ENCODE measurements at regions of chr17 and their contacts with region 1.

Region 1: GRCh38 chr17:48084932-48085444 is 16.3 kb downstream of the CBX1 start:
- DNase-seq: no peak
- ATAC-seq: no peak
- H3K4me3 ChIP-seq: no peak overlapping the region
- H3K4me3 Mint-ChIP-seq: no peak overlapping the region
- H3K27ac ChIP-seq: no peak overlapping the region
- H3K27ac Mint-ChIP-seq: no peak overlapping the region
- H3K4me1 ChIP-seq: no peaks in the 10 kb centered on the region
- H3K4me1 Mint-ChIP-seq: peaks cover 0 to 5% of the 10 kb centered on the region in 2 donors
- H3K27me3 ChIP-seq: no peaks in the 10 kb centered on the region
- H3K27me3 Mint-ChIP-seq: no peaks in the 10 kb centered on the region
- CTCF ChIP-seq: no peak

Region 2: DNA sequence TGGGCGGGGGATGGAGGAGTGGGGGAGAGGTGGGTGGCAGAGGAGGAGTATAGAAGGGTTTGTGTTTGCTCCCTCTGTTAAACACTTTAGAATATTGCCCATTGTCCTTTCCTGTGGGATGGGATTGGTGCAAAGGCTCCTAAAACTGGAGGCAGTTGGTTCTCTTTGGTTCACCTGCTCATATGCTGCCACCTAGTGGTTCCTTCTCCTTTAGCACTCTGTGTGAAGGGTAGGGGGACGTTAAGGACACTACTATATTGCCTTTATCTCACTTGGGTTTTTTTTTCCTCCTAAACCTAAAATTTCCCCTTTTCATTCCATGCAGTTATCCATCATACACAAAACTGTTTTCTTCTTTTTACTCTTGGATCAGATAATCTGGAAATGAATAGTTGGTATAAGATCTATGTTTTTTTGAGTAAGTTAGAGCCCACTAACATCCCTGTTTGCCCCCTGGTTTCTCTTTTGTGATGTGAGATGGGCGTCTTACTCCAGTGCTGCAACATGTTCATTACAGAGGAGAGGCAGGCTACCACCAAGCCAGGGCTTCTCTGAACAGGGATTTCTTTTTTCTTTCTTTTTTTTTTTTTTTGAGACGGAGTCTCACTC is 46.3 kb after region 1 on chr17:
- intact Hi-C with region 1: loop called (anchors 1 kb)
- DNase-seq: peak in 1 of 2 donors; percentile 82
- ATAC-seq: peak; percentile 65 to 85 (median 71)
- H3K4me3 ChIP-seq: no peak overlapping the region
- H3K4me3 Mint-ChIP-seq: no peak overlapping the region
- H3K27ac ChIP-seq: no peak overlapping the region
- H3K27ac Mint-ChIP-seq: peak overlapping the region; percentile 40 to 45
- H3K4me1 ChIP-seq: no peaks in the 10 kb centered on the region
- H3K4me1 Mint-ChIP-seq: peaks cover 0 to 6% of the 10 kb centered on the region in 2 donors
- H3K27me3 ChIP-seq: no peaks in the 10 kb centered on the region
- H3K27me3 Mint-ChIP-seq: no peaks in the 10 kb centered on the region
- CTCF ChIP-seq: peak; percentile 80

Region 3: GRCh38 chr17:48624544-48625494 is 539.8 kb after region 1 on chr17:
- intact Hi-C with region 1: loop called (anchors 5 kb)
- DNase-seq: peak in 1 of 2 donors; percentile 62
- ATAC-seq: peak in 2 of 3 donors; percentile 32 to 33
- H3K4me3 ChIP-seq: no peak overlapping the region
- H3K4me3 Mint-ChIP-seq: peak overlapping the region; percentile 49
- H3K27ac ChIP-seq: no peak overlapping the region
- H3K27ac Mint-ChIP-seq: peak overlapping the region in 1 of 2 donors; percentile 84
- H3K4me1 ChIP-seq: peaks cover 28% of the 10 kb centered on the region
- H3K4me1 Mint-ChIP-seq: peaks cover 19 to 20% of the 10 kb centered on the region in 2 donors
- H3K27me3 ChIP-seq: peaks cover 73% of the 10 kb centered on the region
- H3K27me3 Mint-ChIP-seq: peaks cover 78 to 81% of the 10 kb centered on the region in 2 donors
- CTCF ChIP-seq: no peak